ENCODE measurements at regions of chr6 and their contacts with region 1.

Region 1: DNA sequence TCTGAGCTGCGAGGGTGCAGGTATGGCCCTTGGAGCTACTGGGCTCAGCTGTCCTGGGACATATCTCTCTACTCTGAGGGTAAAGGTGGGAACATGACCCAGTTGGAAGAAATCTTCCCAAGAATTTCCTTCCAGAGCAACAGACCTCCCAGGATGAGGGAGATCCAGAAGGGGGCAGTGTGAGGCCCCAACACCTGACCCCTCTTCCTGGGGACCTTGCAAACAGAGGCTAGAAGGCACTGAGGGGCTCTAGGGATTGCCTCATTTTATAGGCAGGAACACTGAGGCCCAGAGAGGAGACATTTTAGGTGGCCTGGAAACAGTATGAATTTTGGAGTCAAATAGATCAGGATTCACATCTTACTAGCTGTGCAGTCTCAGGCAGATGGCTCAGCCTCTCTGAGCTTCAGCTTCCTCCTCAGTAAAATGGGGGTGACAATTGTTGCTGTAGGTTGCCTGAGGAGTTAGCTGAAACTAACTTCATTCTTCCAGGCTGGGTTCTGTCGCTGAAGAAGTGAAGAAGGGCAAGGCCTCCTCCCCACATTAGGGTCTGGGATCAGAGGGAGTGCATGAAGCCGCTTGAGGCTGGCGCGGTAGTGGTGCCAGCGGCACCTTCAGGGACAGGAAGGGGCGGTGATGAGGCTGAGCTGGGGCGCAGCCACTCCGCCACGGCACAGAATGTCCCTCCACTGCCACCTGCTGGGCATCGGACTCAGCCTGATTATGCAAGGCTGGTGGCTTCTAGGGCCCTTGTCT is 11.4 kb downstream of the KCNK17 start:
- DNase-seq: peak; percentile 93
- CTCF ChIP-seq: peak; percentile 90

Region 2: DNA sequence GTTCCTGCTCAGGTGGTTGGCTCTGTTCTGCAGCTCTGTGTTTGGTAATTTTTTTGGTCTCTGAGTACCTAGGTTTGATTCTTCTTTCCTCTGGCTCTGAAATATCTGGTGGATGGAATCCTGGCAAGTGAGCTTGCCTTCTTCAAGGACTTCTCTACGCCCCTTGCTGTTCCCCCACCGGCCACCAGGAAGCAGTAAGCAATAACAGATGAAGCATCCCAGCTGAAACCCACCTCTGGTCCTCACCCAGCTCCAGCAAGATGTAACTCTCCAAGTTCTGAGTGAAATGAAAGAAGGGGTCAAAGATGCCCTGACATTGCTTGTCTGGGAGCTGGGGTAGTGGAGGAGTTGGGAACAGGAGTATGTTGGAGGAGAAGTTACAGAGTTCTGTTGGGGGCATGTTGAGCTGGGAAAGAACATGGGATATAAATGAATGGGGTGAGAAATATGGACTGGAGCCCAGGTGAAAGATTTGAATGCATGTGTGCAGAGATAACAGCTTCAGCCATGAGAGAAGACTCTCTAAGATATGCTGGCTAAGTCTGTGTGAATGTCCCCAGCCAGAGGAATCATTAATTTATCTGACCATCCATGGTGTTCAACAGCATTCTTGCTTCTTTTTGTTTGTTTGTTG is 305.6 kb before region 1 on chr6:
- in situ Hi-C with region 1: loop called (anchors 10 kb)
- DNase-seq: no peak
- CTCF ChIP-seq: peak; percentile 42

Region 3: GRCh38 chr6:39166189-39166911 is 136.5 kb before region 1 on chr6:
- in situ Hi-C with region 1: loop called (anchors 5 kb)
- DNase-seq: peak; percentile 87
- CTCF ChIP-seq: peak; percentile 91

Measured in GM13976 (cell line).